ENCODE measurements at regions of chr2 and their contacts with region 1.

Region 1: DNA sequence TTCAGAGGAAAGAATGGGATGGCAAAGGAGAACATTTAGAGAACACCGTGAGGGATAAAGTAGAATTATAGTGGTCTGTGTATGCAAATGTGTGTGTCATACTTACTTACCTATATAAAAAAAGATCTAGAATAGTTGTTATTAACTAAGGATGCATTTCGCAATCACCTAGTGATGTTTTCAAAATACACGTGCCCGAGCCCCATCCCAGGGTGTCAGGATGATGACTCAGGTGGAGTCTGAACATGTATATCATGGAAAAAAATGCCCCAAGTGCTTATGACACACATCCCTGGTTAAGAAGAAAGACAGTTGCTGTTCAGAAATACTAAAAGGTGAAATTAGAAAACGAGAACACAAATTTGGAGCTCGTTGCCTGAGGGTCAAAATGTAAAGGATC is 109.0 kb downstream of the CERS6 start:
- DNase-seq: no peak
- ATAC-seq: no peak

Region 2: DNA sequence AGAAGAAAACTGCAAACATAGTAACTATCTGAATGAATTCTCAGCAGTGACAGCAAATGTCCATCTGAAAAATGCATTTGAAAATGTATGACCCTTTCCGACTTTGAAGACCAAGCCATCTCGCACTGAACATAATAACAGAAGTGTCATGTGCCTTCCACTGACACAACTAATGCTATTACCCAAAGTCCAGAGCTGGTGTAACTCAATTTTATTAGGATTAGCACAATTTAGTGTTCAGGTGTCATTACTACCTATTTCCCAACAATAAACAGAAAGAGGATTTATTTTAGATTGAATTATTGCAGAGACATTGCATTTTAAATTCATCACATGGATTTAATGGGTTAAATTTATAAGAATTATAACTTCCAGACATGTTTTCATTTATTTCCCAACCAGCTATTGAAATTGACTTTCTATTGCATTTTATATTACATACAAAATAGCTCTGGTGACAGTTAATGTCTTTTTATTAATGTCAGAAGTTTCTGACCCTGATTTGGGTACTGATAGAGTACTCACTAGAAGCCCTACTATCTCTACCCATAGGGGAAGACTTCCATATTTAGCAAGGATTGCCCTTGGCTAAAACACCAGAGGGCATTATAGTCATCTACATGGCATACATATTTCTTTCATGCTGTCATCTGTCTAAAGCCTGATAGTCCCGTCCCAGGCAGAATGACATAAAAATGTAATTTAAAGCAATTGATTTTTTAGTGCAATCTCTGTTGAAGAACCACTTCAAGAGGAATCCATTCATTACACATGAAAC is 310.8 kb before region 1 on chr2:
- intact Hi-C with region 1: no loop called
- DNase-seq: no peak
- ATAC-seq: no peak

Region 3: GRCh38 chr2:168530982-168531622 is 34.0 kb before region 1 on chr2:
- intact Hi-C with region 1: loop called (anchors 5 kb)
- DNase-seq: no peak
- ATAC-seq: no peak

Region 4: DNA sequence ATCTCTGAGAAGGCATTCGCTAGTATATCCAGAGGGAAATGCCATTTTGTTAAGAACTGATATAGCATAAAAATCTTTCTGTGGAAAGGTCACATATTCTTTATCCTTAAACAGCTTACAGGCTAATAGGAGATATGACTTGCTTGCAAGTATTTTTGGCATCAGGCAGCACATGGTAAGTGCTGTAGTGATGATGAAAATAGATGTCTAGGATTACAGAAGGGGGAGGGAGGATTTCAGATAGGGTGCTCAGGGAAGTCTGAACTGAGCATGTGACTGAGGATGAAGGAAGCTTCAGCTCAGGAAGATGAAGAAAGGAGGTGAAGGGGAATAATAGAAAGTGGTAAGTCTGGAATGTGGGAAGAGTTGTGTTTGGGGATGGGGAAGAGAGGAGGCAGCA is 78.9 kb after region 1 on chr2:
- intact Hi-C with region 1: loop called (anchors 5 kb)
- DNase-seq: no peak
- ATAC-seq: peak; percentile 65

Region 5: DNA sequence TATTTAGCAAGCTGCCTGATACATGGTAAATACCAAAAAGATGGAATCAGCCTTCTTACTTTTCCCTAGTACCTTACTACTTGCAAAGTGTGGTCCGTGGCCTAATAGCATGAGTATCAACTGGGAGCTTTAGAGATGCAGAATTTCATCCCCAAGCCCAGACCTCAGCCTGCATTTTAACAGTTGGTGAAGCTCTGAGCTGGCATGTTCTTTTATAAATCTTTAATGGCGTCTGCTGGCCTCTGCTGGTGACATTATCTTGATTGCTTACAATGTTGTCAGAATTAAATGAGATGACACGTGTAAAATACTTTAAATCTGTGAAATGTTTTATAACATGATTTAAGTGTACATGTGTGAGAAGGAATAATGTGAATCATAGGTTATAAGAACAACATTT is 122.2 kb after region 1 on chr2:
- intact Hi-C with region 1: loop called (anchors 5 kb)
- DNase-seq: no peak
- ATAC-seq: no peak

Region 6: DNA sequence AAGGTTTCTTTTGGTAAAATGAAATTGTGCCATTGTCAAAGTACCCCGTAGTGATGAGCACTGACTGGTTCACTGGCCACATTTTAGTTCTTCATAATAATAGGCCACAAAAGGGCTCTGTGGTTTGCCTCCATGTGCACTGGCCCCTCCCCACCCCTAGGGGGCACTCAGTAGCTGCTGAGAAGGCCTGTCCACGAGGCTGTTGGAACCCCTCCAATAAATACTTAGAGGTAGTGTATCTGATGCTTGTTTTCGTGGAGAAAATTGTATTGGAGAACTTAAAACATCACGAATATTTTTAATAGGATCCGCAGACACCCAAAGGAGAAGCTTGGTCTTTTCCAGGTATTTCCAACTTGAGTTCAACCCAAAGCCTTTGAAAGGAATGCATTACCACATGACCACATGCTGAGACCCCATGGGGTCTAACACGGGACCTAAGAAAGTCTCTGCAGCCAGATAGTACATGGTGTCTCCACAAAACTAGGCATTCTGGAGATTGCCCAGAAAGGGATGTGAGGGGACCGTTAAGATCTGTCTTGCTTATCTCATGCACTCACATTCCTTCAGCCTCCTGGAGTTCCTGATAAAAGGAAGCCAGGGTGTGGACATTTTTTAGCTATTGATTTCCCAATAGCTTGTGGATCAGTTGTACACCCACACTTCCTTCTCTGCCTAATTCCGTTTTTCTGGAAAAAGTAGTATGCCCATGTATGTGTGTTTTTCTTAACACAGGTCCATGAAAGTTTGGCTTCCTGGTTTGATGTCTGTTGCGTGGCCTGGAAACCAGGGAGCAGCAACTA is 208.8 kb after region 1 on chr2:
- intact Hi-C with region 1: no loop called
- DNase-seq: no peak
- ATAC-seq: peak; percentile 50

Measured in Right ventricle myocardium inferior (tissue), 1 donor.